Left ventricle myocardium inferior (tissue), 1 donor: ENCODE measurements at regions of chr14 and their contacts with region 1.

Region 1: GRCh38 chr14:88562831-88563686 is at the start of gene ZC3H14:
- DNase-seq: peak; percentile 87
- H3K4me3 ChIP-seq: peak within 1 kb of the TSS; percentile 84
- H3K27ac ChIP-seq: peak within 1 kb of the TSS; percentile 92
- H3K4me1 ChIP-seq: peaks cover 33% of the 10 kb centered on the region
- H3K27me3 ChIP-seq: no peaks in the 10 kb centered on the region
- CTCF ChIP-seq: no peak
- total RNA-seq, gene ZC3H14: 44.1 TPM

Region 2: GRCh38 chr14:88492272-88493089 is 70.6 kb before region 1 on chr14:
- intact Hi-C with region 1: loop called (anchors 5 kb)
- DNase-seq: no peak
- H3K4me3 ChIP-seq: no peak overlapping the region
- H3K27ac ChIP-seq: peak overlapping the region; percentile 82
- H3K4me1 ChIP-seq: peaks cover 23% of the 10 kb centered on the region
- H3K27me3 ChIP-seq: no peaks in the 10 kb centered on the region
- CTCF ChIP-seq: peak; percentile 95

Region 3: DNA sequence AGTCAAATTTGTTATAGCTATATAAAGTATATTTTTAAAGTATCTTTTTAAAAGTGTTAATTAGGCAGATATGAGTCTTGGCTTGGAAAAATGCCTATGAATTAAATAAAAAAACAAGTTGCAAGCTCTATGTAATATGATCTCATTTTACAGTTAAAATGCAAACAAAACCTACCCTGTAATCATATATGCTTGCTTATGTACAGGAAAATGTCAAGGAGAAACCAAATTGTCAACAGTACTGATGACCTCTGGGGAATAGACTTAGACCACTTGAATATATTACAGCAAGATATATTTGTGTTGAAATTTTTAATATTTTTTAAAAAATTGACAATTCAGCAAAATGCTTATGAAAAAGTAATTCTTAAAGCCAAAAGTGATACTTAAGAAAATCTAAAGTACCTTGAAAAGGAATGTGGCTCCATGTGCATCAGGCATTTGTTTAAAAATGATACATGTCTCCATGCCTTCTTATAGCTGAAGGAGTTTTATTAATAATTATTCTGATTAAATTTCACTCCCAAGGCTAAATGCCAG is 57.5 kb before region 1 on chr14:
- intact Hi-C with region 1: no loop called
- DNase-seq: no peak
- H3K4me3 ChIP-seq: no peak overlapping the region
- H3K27ac ChIP-seq: no peak overlapping the region
- H3K4me1 ChIP-seq: peaks cover 18% of the 10 kb centered on the region
- H3K27me3 ChIP-seq: no peaks in the 10 kb centered on the region
- CTCF ChIP-seq: no peak

Region 4: DNA sequence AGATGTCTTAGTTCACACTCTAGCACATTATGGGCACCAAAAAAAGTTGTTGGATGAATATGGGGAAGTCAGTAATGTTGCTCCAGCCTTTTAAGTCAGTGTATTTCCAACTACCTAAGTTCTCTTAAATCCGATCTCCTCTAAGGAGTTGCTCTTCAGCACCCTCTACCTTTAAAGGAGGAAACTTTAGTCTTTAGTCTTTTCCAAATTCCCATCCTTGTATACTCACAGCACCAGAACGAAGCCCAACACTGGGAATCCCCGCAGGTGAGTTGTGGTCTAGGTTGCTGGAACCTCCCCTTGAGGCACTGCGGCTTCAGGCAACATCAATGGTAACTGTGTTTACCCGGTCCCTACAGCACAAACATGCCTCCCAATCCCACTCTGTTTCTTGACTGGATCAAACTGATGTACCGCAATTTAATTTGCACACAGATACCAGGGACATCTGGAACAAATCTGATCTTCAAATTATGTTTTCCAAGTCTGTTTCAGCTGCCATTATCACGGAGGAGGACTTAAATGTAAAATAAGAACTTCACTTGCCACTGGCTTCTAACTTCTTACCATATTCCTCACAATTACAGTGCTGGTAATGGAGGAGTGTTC is 675.0 kb after region 1 on chr14:
- intact Hi-C with region 1: no loop called
- DNase-seq: no peak
- H3K4me3 ChIP-seq: no peak overlapping the region
- H3K27ac ChIP-seq: no peak overlapping the region
- H3K4me1 ChIP-seq: peaks cover 49% of the 10 kb centered on the region
- H3K27me3 ChIP-seq: no peaks in the 10 kb centered on the region
- CTCF ChIP-seq: peak; percentile 48